ENCODE measurements at regions of chr13 and their contacts with region 1.

Region 1: GRCh38 chr13:49528161-49528560 is 32.4 kb downstream of the PHF11 start:
- DNase-seq: no peak
- ATAC-seq: no peak
- H3K4me3 ChIP-seq: no peak overlapping the region
- H3K27ac ChIP-seq: no peak overlapping the region
- H3K4me1 ChIP-seq: peaks cover 16% of the 10 kb centered on the region
- H3K27me3 ChIP-seq: no peaks in the 10 kb centered on the region
- CTCF ChIP-seq: no peak
- EP300 ChIP-seq: no peak
- POLR2A ChIP-seq: no peak
- RAD21 ChIP-seq: no peak

Region 2: GRCh38 chr13:49450105-49450819 is 77.9 kb before region 1 on chr13:
- CTCF ChIA-PET with region 1: no interaction called
- POLR2A ChIA-PET with region 1: no interaction called
- RAD21 ChIA-PET with region 1: no interaction called
- SMC1A ChIA-PET with region 1: no interaction called
- in situ Hi-C with region 1: no loop called
- intact Hi-C with region 1: no loop called
- DNase-seq: no peak
- ATAC-seq: no peak
- H3K4me3 ChIP-seq: no peak overlapping the region
- H3K27ac ChIP-seq: no peak overlapping the region
- H3K4me1 ChIP-seq: peaks cover 9% of the 10 kb centered on the region; the same call in 1 of the 2 replicates
- H3K27me3 ChIP-seq: no peaks in the 10 kb centered on the region
- CTCF ChIP-seq: no peak
- EP300 ChIP-seq: no peak
- POLR2A ChIP-seq: no peak
- RAD21 ChIP-seq: no peak

Region 3: GRCh38 chr13:49543656-49544055 is 15.5 kb after region 1 on chr13:
- CTCF ChIA-PET with region 1: interaction called, 3 read pairs
- POLR2A ChIA-PET with region 1: no interaction called
- RAD21 ChIA-PET with region 1: no interaction called
- SMC1A ChIA-PET with region 1: interaction called, 6 read pairs
- in situ Hi-C with region 1: no loop called
- intact Hi-C with region 1: loop called (anchors 2 kb)
- DNase-seq: no peak
- ATAC-seq: no peak
- H3K4me3 ChIP-seq: no peak overlapping the region
- H3K27ac ChIP-seq: no peak overlapping the region
- H3K4me1 ChIP-seq: peaks cover 7% of the 10 kb centered on the region
- H3K27me3 ChIP-seq: no peaks in the 10 kb centered on the region
- CTCF ChIP-seq: no peak
- EP300 ChIP-seq: no peak
- POLR2A ChIP-seq: no peak
- RAD21 ChIP-seq: no peak